PC-9 (cell line): ENCODE measurements at regions of chr3 and their contacts with region 1.

Region 1: GRCh38 chr3:102248981-102249705 is 185.7 kb upstream of the ZPLD1 start:
- DNase-seq: no peak
- H3K4me3 ChIP-seq: no peak overlapping the region
- H3K27ac ChIP-seq: no peak overlapping the region
- H3K4me1 ChIP-seq: peaks cover 12% of the 10 kb centered on the region; the same call in 1 of the 2 replicates
- H3K27me3 ChIP-seq: no peaks in the 10 kb centered on the region
- CTCF ChIP-seq: no peak

Region 2: GRCh38 chr3:101478980-101479379 is 770.2 kb before region 1 on chr3:
- CTCF ChIA-PET with region 1: no interaction called
- POLR2A ChIA-PET with region 1: interaction called, 33 read pairs
- intact Hi-C with region 1: no loop called
- DNase-seq: no peak
- H3K4me3 ChIP-seq: no peak overlapping the region
- H3K27ac ChIP-seq: no peak overlapping the region
- H3K4me1 ChIP-seq: no peaks in the 10 kb centered on the region
- H3K27me3 ChIP-seq: no peaks in the 10 kb centered on the region
- CTCF ChIP-seq: no peak

Region 3: GRCh38 chr3:102141096-102141927 is 107.8 kb before region 1 on chr3:
- CTCF ChIA-PET with region 1: no interaction called
- POLR2A ChIA-PET with region 1: no interaction called
- intact Hi-C with region 1: no loop called
- DNase-seq: no peak
- H3K4me3 ChIP-seq: no peak overlapping the region
- H3K27ac ChIP-seq: no peak overlapping the region
- H3K4me1 ChIP-seq: no peaks in the 10 kb centered on the region
- H3K27me3 ChIP-seq: no peaks in the 10 kb centered on the region
- CTCF ChIP-seq: no peak

Region 4: GRCh38 chr3:102215166-102215565 is 34.0 kb before region 1 on chr3:
- CTCF ChIA-PET with region 1: no interaction called
- POLR2A ChIA-PET with region 1: no interaction called
- intact Hi-C with region 1: no loop called
- DNase-seq: no peak
- H3K4me3 ChIP-seq: no peak overlapping the region
- H3K27ac ChIP-seq: no peak overlapping the region
- H3K4me1 ChIP-seq: no peaks in the 10 kb centered on the region
- H3K27me3 ChIP-seq: no peaks in the 10 kb centered on the region
- CTCF ChIP-seq: no peak

Region 5: DNA sequence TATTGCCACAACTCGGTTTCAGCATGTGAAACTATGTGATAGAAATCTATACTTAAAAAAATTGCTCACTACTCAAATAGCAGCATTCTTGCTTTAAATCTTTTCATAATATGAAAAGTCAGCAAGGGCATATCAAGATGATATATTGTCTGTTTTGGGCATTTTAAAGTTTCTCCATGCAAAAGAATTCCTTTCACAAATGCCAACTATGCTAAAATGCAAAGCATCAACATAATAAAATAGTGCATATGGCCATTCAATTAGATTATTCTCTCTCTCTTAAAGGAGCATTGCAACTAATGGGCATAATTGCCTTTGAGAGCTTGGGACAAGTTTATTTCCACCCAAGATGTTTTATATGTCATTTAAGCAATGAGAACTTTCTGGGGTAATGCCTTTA is 660.8 kb after region 1 on chr3:
- CTCF ChIA-PET with region 1: interaction called, 17 read pairs
- POLR2A ChIA-PET with region 1: no interaction called
- intact Hi-C with region 1: no loop called
- DNase-seq: no peak
- H3K4me3 ChIP-seq: no peak overlapping the region
- H3K27ac ChIP-seq: no peak overlapping the region
- H3K4me1 ChIP-seq: no peaks in the 10 kb centered on the region
- H3K27me3 ChIP-seq: no peaks in the 10 kb centered on the region
- CTCF ChIP-seq: no peak